Psoas muscle (tissue), 8 donors: ENCODE measurements at regions of chr16 and their contacts with region 1.

Region 1: DNA sequence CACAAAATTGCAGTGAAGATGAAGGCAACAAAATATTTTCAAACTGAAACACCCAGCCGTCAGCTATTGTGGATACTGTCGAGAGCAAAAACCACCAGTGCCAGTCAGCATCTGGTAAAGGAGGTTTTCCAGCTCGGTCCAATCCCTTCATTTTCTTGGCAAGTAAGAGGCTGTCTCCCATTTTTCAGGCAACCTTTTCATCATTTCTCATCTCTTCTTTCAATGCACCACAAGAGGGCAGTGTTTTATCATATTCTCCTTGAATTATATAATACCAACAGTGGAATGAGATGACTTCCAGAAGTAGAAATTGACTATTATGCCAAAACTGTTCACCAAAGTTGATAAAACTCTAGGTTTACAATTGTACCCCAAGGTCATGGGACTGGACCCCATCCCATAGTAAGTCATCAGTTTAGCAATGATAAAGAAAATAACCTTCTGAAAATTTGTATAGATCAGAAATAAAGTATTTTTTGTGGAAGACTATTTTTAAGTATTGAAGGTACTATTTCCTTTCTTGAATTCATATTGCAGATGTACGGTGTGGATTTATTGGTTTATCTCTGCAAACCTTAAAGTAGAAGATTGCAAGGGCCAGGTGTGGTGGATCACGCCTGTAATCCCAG is 16.8 kb downstream of the NQO1 start:
- DNase-seq: no peak
- ATAC-seq: peak; percentile 37 to 75 (median 58)
- H3K4me3 ChIP-seq: no peak overlapping the region
- H3K27ac ChIP-seq: no peak overlapping the region
- H3K4me1 ChIP-seq: no peaks in the 10 kb centered on the region
- H3K27me3 ChIP-seq: no peaks in the 10 kb centered on the region
- CTCF ChIP-seq: peak; percentile 69

Region 2: DNA sequence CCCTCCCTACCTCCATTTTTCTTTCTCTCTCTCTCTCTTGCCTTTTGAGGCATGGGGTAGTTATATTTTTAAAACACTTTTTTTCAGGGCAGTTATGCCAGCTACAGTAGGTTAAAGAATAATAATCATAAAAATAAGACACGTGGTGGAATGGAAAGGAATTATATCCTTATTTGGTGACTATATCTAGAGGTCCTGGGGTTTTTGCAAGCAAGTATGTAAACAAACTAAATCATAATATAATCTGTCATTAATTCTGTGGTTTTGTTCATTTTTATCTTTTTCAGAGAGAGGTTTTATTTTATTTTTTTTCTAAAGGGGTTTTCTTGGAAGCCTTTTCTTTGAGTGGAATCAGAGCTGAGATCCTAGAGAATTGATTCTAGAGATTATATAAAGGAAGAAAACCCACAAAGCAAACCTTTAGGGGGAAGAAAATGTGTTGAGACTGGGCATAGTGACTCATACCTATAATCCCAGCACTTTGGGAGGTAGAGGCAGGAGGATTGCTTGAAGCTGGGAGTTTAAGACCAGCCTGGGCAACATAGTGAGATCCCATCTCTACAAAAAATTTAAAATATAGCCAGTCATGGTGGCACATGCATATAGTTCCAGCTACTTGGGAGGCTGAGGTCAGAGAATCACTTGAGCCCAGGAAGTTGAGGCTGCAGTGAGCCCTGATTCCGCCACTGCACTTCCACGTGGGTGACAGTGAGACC is 36.4 kb before region 1 on chr16:
- intact Hi-C with region 1: loop called in 1 of 2 experiments (anchors 1 kb)
- DNase-seq: no peak
- ATAC-seq: no peak
- H3K4me3 ChIP-seq: no peak overlapping the region
- H3K27ac ChIP-seq: no peak overlapping the region
- H3K4me1 ChIP-seq: no peaks in the 10 kb centered on the region
- H3K27me3 ChIP-seq: no peaks in the 10 kb centered on the region
- CTCF ChIP-seq: no peak

Region 3: DNA sequence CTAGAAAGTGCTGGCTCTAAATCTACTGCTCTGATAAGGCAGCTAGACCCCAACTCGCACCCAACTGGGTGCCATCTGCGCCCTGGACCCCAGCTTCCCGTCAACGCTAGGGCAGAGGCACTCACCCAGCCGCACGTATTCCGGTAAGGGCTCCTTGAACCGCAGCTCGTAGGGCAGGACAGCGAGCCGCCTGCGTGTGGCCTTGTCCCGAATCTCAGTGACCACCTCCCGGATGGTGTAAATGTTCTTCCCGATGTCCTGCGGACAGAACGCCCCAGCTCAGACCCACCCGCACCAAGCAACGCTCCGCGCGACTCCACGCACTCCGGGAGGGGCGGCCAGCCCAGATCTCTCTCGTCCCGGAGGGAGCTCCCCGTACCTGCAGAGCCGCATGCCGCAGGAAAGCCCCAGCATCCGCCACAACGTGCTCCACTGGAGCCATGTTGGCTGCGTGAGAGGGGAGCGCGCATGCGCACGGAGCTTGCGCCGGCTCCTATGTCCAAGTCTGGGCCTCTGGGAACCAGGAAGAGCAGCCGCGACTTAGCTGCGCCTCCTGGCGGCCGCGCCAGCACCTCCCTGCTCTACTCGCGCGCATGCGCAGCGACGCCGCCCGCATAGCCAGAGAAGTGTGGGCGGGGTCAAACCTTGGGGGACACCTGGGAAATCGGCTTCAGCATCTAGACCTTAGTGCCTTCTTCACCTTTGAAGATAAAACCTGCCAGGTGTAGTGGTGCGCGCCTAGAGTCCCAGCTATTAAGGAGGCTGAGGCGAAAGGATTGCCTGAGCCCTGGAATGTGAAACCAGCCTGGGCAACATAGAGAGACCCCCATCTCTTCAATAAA is 45.1 kb after region 1 on chr16 and contains the start of gene NOB1:
- intact Hi-C with region 1: loop called (anchors 2 kb)
- DNase-seq: peak; percentile 94 to 99
- ATAC-seq: peak; percentile 97 to 99 (median 99)
- H3K4me3 ChIP-seq: peak within 1 kb of the TSS; percentile 94
- H3K27ac ChIP-seq: peak within 1 kb of the TSS; percentile 88
- H3K4me1 ChIP-seq: peaks cover 10% of the 10 kb centered on the region
- H3K27me3 ChIP-seq: no peaks in the 10 kb centered on the region
- CTCF ChIP-seq: peak; percentile 97
- total RNA-seq, gene NOB1: 29.3 to 53.5 (median 43.0) TPM